PC-9 (cell line): ENCODE measurements at regions of chr9 and their contacts with region 1.

Region 1: DNA sequence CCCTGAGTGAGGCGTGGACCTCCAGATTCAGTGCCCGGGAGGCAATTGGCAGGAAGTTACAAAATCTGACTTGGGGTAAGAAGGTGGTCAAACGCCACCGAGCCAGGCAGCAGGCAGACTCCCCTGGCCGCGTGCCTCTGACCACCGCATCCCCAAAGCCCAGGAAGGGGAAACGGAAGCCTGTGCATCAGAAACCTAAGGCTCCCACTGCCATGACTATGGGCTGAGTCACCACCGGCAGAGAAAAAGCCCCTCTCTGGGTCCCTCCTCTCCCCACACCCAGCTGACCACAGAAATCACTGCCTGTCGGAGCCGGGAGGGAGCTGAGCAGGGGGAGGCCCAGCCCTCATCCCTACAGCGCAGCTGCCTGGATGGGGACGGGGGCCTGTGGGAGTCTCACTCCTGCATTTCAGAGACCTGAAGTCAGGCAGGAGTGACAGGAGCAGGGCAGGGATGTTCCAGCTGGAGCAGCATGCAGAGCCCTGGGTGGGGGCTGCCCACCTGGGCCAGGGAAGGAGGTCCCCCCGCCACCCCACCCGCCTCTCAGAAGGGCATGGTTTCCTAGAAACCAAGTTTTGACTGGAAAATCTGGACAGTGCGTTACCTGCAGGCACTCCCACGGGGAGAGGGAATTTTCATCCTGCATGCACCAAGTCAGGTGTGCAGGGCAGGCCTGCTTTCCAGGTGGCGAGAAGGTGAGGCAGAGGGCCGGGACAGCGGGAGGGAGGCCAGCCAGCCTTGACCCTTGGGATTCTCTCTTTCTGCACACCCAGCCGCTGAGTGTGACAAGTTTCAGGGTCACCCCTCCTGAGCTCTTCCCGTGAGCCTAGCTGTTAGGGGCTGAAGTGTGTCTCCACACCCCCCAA is 68.2 kb downstream of the LRSAM1 start:
- DNase-seq: peak; percentile 92 to 96
- H3K4me3 ChIP-seq: no peak overlapping the region
- H3K27ac ChIP-seq: peak overlapping the region; percentile 86
- H3K4me1 ChIP-seq: peaks cover 54% of the 10 kb centered on the region
- H3K27me3 ChIP-seq: no peaks in the 10 kb centered on the region
- CTCF ChIP-seq: no peak

Region 2: GRCh38 chr9:127450830-127451724 is 68.5 kb before region 1 on chr9 and contains the starts of genes LRSAM1 and RPL12:
- CTCF ChIA-PET with region 1: interaction called, 3 read pairs
- POLR2A ChIA-PET with region 1: interaction called, 6 read pairs
- intact Hi-C with region 1: loop called (anchors 1 kb)
- DNase-seq: peak; percentile 78 to 97
- H3K4me3 ChIP-seq: peak within 1 kb of the TSS; percentile 99
- H3K27ac ChIP-seq: peak within 1 kb of the TSS; percentile 95
- H3K4me1 ChIP-seq: peaks cover 23% of the 10 kb centered on the region
- H3K27me3 ChIP-seq: no peaks in the 10 kb centered on the region
- CTCF ChIP-seq: no peak
- total RNA-seq, gene LRSAM1: 44.0 and 63.9 TPM in 2 replicates
- total RNA-seq, gene RPL12: 1,648 and 1,717 TPM in 2 replicates

Region 3: DNA sequence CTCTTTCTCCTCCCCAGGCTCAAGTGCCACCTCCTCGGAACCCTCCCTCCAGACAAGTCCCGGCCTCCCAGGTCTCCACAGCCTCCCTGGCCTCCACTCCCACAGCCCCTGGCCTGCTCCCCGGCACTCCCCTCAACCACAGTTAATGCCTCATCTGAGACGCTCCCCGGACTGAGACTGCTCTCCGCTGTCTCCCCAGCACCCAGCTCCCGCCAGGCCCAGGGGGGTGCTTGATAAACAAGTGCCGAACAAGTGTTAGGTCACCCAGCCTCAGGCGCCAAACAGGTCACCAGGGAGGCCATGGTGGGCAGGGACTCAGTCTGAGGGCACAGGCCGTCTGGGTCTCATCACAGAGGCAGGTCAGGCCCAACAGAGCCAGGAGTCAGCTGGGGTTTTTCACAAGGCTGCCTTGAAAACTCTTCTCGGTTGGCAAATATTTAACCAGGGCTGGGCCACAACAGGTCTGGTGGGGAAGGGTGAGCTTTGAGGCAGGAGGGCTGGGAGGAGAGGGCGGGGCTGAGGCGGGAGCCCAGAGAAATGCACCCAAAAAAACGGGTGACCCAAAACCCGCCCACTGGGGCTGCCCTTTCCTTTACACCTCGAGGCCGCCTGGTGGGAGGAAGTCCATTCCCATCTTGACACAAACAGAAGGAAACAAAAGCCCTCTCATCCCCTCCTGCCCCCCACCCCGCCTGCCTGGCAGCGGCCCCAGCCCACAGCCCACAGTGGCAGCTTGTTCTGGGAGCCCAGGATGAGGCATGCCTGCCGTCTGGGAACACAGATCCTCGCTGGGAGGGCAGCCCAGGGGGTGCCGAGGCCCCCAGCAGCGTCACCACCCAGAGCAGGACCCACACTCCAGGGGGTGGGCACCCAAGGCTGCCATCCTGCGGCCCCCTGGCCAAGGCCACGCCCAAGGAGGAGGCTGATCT is 25.9 kb after region 1 on chr9:
- CTCF ChIA-PET with region 1: no interaction called
- POLR2A ChIA-PET with region 1: interaction called, 3 read pairs
- intact Hi-C with region 1: loop called (anchors 1 kb)
- DNase-seq: peak; percentile 96 to 97
- H3K4me3 ChIP-seq: peak overlapping the region; percentile 46; the same call in 1 of the 2 replicates
- H3K27ac ChIP-seq: peak overlapping the region; percentile 90
- H3K4me1 ChIP-seq: peaks cover 72% of the 10 kb centered on the region
- H3K27me3 ChIP-seq: no peaks in the 10 kb centered on the region
- CTCF ChIP-seq: 0 out of 2 replicates have a peak, but pooled peaks have one; percentile 23

Region 4: DNA sequence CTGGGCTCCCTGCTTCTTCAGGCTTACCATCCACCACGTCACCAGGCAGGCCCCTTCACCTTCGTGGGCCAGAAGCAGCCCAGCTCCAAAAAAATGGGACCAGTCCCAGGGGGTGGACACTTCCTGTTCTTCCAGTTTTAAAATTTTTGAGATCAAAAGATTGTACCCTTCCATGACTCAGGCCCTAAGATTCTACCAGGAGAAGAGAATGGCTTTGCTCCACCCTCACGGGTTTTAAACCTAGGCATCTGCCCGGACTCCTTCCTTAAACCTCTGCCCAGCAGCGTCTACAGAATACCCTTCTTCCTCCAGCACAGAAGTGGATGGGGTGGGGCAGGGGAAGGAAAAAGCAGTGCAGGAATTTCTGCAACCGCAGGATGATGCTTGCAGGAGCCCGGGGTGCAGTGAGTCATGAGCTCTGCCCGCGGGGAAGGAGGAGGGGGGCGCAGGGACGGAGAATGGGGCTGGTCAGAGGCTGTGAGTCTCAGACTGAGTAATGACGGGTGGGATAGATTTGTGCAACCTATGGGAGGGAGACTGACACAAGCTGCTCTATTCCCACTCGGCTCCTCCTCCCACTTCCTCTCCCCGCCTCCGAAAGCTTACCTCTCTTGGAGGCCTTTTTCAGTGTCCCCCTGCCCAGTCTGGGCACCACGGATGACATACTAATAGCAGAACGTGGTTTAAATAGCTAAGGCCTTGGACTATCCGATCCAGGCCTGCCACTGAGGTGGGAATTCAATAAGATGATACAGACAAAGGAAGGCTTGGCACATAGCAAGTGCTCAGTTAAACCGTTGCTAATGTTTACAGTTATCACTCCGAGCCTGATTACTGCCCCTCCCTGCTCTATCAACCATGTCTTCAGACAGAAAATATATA is 42.3 kb after region 1 on chr9:
- CTCF ChIA-PET with region 1: interaction called, 7 read pairs
- POLR2A ChIA-PET with region 1: interaction called, 10 read pairs
- intact Hi-C with region 1: loop called (anchors 1 kb)
- DNase-seq: peak; percentile 99 to 100
- H3K4me3 ChIP-seq: peak overlapping the region; percentile 8; the same call in 1 of the 2 replicates
- H3K27ac ChIP-seq: peak overlapping the region; percentile 86
- H3K4me1 ChIP-seq: peaks cover 95% of the 10 kb centered on the region
- H3K27me3 ChIP-seq: no peaks in the 10 kb centered on the region
- CTCF ChIP-seq: no peak

Region 5: DNA sequence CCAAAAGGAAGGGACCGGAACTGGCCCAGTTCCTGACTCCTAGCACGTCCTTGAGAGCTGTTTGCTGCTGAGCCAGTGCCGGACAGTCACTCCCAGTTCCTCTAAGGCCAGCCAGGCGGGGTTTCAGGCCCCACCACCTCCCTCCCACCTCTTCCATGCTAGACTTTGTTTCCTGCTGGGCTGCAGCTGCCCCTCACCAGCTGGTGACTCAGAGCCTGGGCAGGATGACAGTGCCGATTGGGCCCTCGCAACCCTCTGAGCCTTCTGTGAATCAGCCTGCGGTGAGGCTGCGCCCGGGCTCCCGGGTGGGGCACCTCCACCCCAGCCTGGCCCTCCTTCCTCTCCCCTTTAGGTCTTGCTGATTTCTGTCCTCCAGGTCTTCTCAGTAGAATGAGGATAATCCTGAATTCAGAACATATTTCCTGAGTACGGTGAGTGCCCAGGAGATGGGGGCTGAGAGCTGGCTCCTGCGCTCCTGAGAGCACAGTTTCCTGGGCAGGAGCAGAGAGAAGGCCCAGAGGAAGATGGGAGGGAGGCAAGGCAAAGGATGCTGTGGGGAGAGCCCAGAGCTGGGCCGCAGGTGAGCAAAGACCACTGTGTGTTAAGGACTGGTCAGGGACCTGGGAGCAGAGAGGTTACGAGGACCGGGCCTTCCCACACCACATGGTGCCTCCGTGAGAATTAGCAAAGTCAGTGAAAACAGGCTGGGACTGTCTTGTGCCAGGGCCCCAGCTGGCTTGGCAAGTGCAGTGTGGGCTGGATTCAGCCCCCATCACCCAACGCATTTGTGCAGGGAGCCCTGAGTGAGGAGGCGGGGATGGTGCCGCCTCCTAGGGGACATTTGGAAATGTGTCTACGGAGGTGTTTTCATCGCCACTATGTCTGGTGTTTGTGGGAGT is 59.7 kb after region 1 on chr9:
- CTCF ChIA-PET with region 1: interaction called, 4 read pairs
- POLR2A ChIA-PET with region 1: interaction called, 4 read pairs
- intact Hi-C with region 1: loop called (anchors 1 kb)
- DNase-seq: peak; percentile 97 to 98
- H3K4me3 ChIP-seq: peak overlapping the region; percentile 57
- H3K27ac ChIP-seq: peak overlapping the region; percentile 96
- H3K4me1 ChIP-seq: peaks cover 57% of the 10 kb centered on the region
- H3K27me3 ChIP-seq: no peaks in the 10 kb centered on the region
- CTCF ChIP-seq: peak; percentile 50